A673 (cell line): ENCODE measurements at regions of chr1 and their contacts with region 1.

Region 1: DNA sequence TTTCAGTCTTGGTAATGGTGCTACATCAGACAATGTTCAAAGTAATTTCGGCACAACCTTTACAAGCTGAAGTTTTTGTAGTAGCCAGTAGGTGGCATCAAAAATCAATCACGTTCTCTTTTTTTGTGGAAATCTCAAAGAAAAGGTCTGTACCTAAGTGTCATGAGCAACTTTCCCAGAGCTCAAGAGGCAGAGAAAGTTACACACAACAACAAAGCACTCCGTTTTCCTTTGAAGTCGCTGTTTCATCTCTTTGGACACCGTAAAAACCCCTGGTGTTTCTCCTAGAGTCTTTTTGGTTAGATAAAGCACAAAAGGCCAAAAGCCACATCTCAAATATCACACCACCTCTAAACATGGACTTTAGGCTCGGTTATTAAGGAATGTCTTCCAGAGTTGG is 131.6 kb downstream of the LHX8 start:
- DNase-seq: peak; percentile 61
- H3K4me3 ChIP-seq: no peak overlapping the region
- H3K27ac ChIP-seq: no peak overlapping the region
- H3K4me1 ChIP-seq: no peaks in the 10 kb centered on the region
- H3K27me3 ChIP-seq: no peaks in the 10 kb centered on the region
- CTCF ChIP-seq: peak; percentile 71

Region 2: DNA sequence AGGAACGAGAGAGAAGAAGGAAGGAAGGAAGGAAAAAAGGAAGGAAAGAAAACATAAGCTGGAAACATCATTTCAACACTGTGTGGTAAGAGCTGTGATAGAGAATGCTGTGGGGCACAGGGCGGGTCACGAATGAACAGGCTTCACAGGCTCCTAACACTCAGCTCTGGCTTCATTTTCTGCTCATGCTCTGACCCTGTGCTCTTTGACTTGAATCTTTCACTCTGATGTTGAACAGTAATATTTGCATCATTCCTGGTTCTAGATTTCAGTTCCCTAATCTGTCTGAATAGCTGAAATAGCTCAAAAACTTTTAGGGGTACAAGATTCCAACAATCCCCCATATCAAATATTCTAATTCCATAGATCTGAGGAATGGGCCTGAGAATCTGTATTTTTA is 75.7 kb after region 1 on chr1:
- CTCF ChIA-PET with region 1: no interaction called
- POLR2A ChIA-PET with region 1: no interaction called
- intact Hi-C with region 1: no loop called
- DNase-seq: no peak
- H3K4me3 ChIP-seq: no peak overlapping the region
- H3K27ac ChIP-seq: no peak overlapping the region
- H3K4me1 ChIP-seq: peaks cover 7% of the 10 kb centered on the region
- H3K27me3 ChIP-seq: no peaks in the 10 kb centered on the region
- CTCF ChIP-seq: no peak

Region 3: GRCh38 chr1:75423616-75424015 is 157.8 kb after region 1 on chr1:
- CTCF ChIA-PET with region 1: no interaction called
- POLR2A ChIA-PET with region 1: no interaction called
- intact Hi-C with region 1: loop called (anchors 5 kb)
- DNase-seq: peak; percentile 16
- H3K4me3 ChIP-seq: no peak overlapping the region
- H3K27ac ChIP-seq: no peak overlapping the region
- H3K4me1 ChIP-seq: no peaks in the 10 kb centered on the region
- H3K27me3 ChIP-seq: no peaks in the 10 kb centered on the region
- CTCF ChIP-seq: peak; percentile 40; the same call in 1 of the 2 replicates

Region 4: GRCh38 chr1:75632350-75632949 is 366.7 kb after region 1 on chr1:
- CTCF ChIA-PET with region 1: interaction called, 5 read pairs
- POLR2A ChIA-PET with region 1: no interaction called
- intact Hi-C with region 1: loop called (anchors 1 kb)
- DNase-seq: peak; percentile 54
- H3K4me3 ChIP-seq: no peak overlapping the region
- H3K27ac ChIP-seq: no peak overlapping the region
- H3K4me1 ChIP-seq: peaks cover 10% of the 10 kb centered on the region
- H3K27me3 ChIP-seq: no peaks in the 10 kb centered on the region
- CTCF ChIP-seq: peak; percentile 77

Region 5: GRCh38 chr1:75672528-75673393 is 407.0 kb after region 1 on chr1:
- CTCF ChIA-PET with region 1: no interaction called
- POLR2A ChIA-PET with region 1: no interaction called
- intact Hi-C with region 1: no loop called
- DNase-seq: peak; percentile 21
- H3K4me3 ChIP-seq: no peak overlapping the region
- H3K27ac ChIP-seq: no peak overlapping the region
- H3K4me1 ChIP-seq: no peaks in the 10 kb centered on the region
- H3K27me3 ChIP-seq: no peaks in the 10 kb centered on the region
- CTCF ChIP-seq: no peak

Region 6: GRCh38 chr1:75712306-75712705 is 446.5 kb after region 1 on chr1:
- CTCF ChIA-PET with region 1: no interaction called
- POLR2A ChIA-PET with region 1: no interaction called
- intact Hi-C with region 1: loop called (anchors 10 kb)
- DNase-seq: no peak
- H3K4me3 ChIP-seq: no peak overlapping the region
- H3K27ac ChIP-seq: no peak overlapping the region
- H3K4me1 ChIP-seq: no peaks in the 10 kb centered on the region
- H3K27me3 ChIP-seq: no peaks in the 10 kb centered on the region
- CTCF ChIP-seq: no peak